ENCODE measurements at regions of chr14 and their contacts with region 1.

Region 1: GRCh38 chr14:69242311-69243224 is 17.4 kb upstream of the GALNT16 start:
- DNase-seq: peak; percentile 27
- H3K4me3 ChIP-seq: no peak overlapping the region
- H3K27me3 ChIP-seq: no peaks in the 10 kb centered on the region
- CTCF ChIP-seq: peak; percentile 63

Region 2: GRCh38 chr14:68939893-68940613 is 302.5 kb before region 1 on chr14:
- CTCF ChIA-PET with region 1: no interaction called
- POLR2A ChIA-PET with region 1: no interaction called
- DNase-seq: peak; percentile 92
- H3K4me3 ChIP-seq: no peak overlapping the region
- H3K27me3 ChIP-seq: no peaks in the 10 kb centered on the region
- CTCF ChIP-seq: no peak

Region 3: DNA sequence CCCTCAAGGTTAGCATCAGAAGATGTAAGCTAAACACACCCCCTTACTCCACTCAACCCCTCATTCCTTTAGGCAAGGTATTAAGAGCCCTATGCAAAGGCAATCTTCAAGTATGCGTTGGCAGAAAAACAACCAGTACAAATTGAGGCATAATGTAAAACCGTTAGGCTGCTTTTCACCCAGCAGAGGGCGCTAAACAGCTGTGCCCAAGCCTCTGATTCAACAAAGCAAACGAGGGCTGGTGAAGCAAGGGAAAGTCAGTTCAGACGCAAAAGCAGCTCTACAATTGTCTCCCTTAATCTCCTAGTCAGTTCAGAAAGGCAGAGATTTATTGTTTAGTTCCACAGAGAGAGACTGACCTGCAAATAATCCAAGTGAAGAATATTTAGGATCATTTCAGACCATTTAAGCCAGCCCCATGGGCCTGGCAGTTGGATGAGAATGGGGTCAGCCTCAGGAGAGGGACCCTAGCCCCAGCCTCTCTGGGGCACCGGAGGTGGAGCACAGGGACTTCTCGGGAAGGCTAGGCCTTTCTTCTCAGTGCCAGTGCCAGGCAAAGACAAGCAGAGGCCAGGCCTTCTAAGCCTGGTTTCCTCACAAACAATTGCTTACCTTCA is 113.2 kb before region 1 on chr14:
- CTCF ChIA-PET with region 1: interaction called, 14 read pairs
- POLR2A ChIA-PET with region 1: no interaction called
- DNase-seq: no peak
- H3K4me3 ChIP-seq: no peak overlapping the region
- H3K27me3 ChIP-seq: no peaks in the 10 kb centered on the region
- CTCF ChIP-seq: peak; percentile 95

Region 4: GRCh38 chr14:69232388-69232787 is 10.2 kb before region 1 on chr14:
- CTCF ChIA-PET with region 1: interaction called, 12 read pairs
- POLR2A ChIA-PET with region 1: no interaction called
- DNase-seq: no peak
- H3K4me3 ChIP-seq: no peak overlapping the region
- H3K27me3 ChIP-seq: no peaks in the 10 kb centered on the region
- CTCF ChIP-seq: no peak

Region 5: DNA sequence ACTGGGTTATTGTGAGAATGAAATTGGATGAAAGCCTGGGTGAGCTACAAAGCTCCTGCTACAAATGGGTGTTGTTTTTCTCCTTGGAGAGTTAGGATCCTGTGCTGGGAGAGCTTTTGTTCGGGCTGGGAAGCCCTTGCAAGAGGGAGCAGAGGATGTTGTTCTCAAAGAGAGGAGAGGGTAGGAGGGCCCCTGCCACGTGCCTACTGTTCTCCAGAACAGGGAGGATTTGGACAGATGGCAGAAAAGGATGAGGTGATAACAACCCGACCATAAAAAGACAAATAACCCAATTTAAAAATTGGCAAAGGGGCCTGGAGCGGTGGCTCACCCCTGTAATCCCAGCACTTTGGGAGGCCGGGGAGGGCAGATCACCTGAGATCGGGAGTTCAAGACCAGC is 86.2 kb after region 1 on chr14:
- CTCF ChIA-PET with region 1: no interaction called
- POLR2A ChIA-PET with region 1: no interaction called
- DNase-seq: no peak
- H3K4me3 ChIP-seq: no peak overlapping the region
- H3K27me3 ChIP-seq: peaks cover 5% of the 10 kb centered on the region
- CTCF ChIP-seq: no peak

Region 6: GRCh38 chr14:69363055-69363454 is 120.5 kb after region 1 on chr14:
- CTCF ChIA-PET with region 1: interaction called, 29 read pairs
- POLR2A ChIA-PET with region 1: no interaction called
- DNase-seq: no peak
- H3K4me3 ChIP-seq: no peak overlapping the region
- H3K27me3 ChIP-seq: no peaks in the 10 kb centered on the region; the same call in 1 of the 2 replicates
- CTCF ChIP-seq: peak; percentile 66

Region 7: GRCh38 chr14:69460093-69460701 is 217.6 kb after region 1 on chr14:
- CTCF ChIA-PET with region 1: interaction called, 50 read pairs
- POLR2A ChIA-PET with region 1: interaction called, 5 read pairs
- DNase-seq: peak; percentile 50
- H3K4me3 ChIP-seq: no peak overlapping the region
- H3K27me3 ChIP-seq: no peaks in the 10 kb centered on the region
- CTCF ChIP-seq: peak; percentile 83

Measured in BJ (cell line).